HepG2 (cell line): ENCODE measurements at regions of chr5 and their contacts with region 1.

Region 1: GRCh38 chr5:140639148-140639979 is at the start of gene TMCO6:
- DNase-seq: peak; percentile 99
- ATAC-seq: peak; percentile 90
- H3K4me3 ChIP-seq: peak within 1 kb of the TSS; percentile 67 to 89 (median 71)
- H3K27ac ChIP-seq: peak within 1 kb of the TSS; percentile 94
- H3K4me1 ChIP-seq: peaks cover 67% of the 10 kb centered on the region
- H3K27me3 ChIP-seq: no peaks in the 10 kb centered on the region
- CTCF ChIP-seq: peak; percentile 82
- EP300 ChIP-seq: peak; percentile 86 to 94; a peak in 3 of 4 replicates
- POLR2A ChIP-seq: peak in 1 of 2 experiments; percentile 90; a peak in 3 of 4 replicates
- RAD21 ChIP-seq: peak; percentile 66; the same call in 1 of the 2 replicates
- total RNA-seq, gene TMCO6: 8.2 and 16.6 TPM in 2 replicates

Region 2: DNA sequence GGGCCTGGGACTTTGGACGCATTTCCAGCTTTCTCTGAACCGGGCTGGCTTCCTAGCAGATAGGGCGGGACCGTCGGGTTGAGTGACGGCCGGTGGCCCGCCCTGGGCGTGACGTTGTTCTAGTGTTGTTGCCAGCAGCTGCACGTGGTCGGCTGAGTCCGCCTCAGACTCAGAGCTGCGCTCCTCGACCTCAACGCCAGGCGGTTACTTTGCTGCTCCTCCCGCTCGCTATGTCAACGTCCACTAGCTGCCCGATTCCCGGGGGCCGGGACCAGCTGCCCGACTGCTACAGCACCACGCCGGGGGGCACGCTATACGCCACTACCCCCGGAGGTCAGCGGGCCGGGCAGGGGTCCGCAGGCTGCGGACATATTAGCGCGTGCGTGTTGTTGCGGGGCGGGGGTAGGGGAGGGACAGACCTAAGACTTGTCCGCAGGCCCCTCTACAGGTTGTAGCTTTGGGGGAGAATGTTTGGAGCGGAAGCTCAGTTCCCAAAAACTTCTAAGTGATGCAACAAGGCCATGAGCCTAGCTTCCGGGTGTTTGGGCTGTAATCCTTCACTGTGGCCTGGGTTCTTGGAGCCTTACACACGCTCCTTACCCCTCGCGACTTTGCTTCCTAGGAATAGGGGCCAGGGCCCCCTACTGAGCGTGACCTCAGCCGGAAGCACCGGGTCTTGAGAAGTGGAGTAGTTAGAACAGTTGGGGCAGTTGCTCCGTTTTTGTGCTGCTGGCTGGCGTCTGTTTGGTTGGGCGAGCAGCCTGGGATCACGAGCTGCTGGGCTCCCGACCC is 91.7 kb before region 1 on chr5 and contains the start of gene EIF4EBP3:
- CTCF ChIA-PET with region 1: no interaction called
- POLR2A ChIA-PET with region 1: interaction called, 25 read pairs
- in situ Hi-C with region 1: no loop called
- intact Hi-C with region 1: loop called (anchors 1 kb)
- DNase-seq: peak; percentile 94
- ATAC-seq: peak; percentile 94
- H3K4me3 ChIP-seq: peak within 1 kb of the TSS; percentile 21 to 69 (median 48); a peak in 5 of 6 replicates
- H3K27ac ChIP-seq: peak within 1 kb of the TSS; percentile 86
- H3K4me1 ChIP-seq: peaks cover 27% of the 10 kb centered on the region
- H3K27me3 ChIP-seq: no peaks in the 10 kb centered on the region
- CTCF ChIP-seq: peak; percentile 62
- EP300 ChIP-seq: no peak
- POLR2A ChIP-seq: peak; percentile 3 to 58
- RAD21 ChIP-seq: peak; percentile 73
- total RNA-seq, gene EIF4EBP3: 1.7 and 1.9 TPM in 2 replicates

Region 3: GRCh38 chr5:140557136-140557805 is 82.1 kb before region 1 on chr5 and contains the start of gene SRA1:
- CTCF ChIA-PET with region 1: no interaction called
- POLR2A ChIA-PET with region 1: interaction called, 10 read pairs
- in situ Hi-C with region 1: loop called (anchors 5 kb)
- intact Hi-C with region 1: no loop called
- DNase-seq: peak; percentile 85
- ATAC-seq: peak; percentile 95
- H3K4me3 ChIP-seq: peak within 1 kb of the TSS; percentile 80 to 96 (median 84)
- H3K27ac ChIP-seq: peak within 1 kb of the TSS; percentile 55
- H3K4me1 ChIP-seq: peaks cover 37% of the 10 kb centered on the region
- H3K27me3 ChIP-seq: no peaks in the 10 kb centered on the region
- CTCF ChIP-seq: peak; percentile 33
- EP300 ChIP-seq: no peak; a peak in 1 of 4 replicates
- POLR2A ChIP-seq: peak; percentile 82 to 95
- RAD21 ChIP-seq: peak; percentile 51
- total RNA-seq, gene SRA1: 32.8 and 38.1 TPM in 2 replicates

Region 4: GRCh38 chr5:140710899-140711552 is 71.7 kb after region 1 on chr5:
- CTCF ChIA-PET with region 1: no interaction called
- POLR2A ChIA-PET with region 1: interaction called, 11 read pairs
- in situ Hi-C with region 1: no loop called
- intact Hi-C with region 1: no loop called
- DNase-seq: peak; percentile 98
- ATAC-seq: peak; percentile 94
- H3K4me3 ChIP-seq: peak overlapping the region; percentile 59 to 86 (median 77)
- H3K27ac ChIP-seq: peak overlapping the region; percentile 92
- H3K4me1 ChIP-seq: peaks cover 24% of the 10 kb centered on the region
- H3K27me3 ChIP-seq: no peaks in the 10 kb centered on the region; a peak in 1 of 5 replicates
- CTCF ChIP-seq: no peak
- EP300 ChIP-seq: peak in 1 of 2 experiments; percentile 47; a peak in 1 of 4 replicates
- POLR2A ChIP-seq: peak; percentile 48 to 82
- RAD21 ChIP-seq: 0 out of 2 replicates have a peak, but pooled peaks have one; percentile 7

Region 5: DNA sequence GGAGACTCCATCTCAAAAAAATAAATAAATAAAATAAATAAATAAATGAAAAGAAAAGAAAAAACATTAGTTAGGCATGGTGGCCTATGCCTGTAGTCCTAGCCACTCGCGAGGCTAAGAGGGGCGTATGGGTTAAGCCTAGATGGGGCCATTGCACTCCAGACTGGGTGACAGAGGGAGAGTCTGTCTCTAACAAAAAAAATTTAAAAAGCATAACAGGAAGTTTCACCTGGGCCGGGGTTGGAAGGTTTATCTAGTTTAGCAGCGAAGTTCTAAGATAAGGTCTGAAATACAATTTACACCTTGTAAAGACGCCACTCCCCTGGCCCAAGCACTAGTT is 78.8 kb after region 1 on chr5:
- CTCF ChIA-PET with region 1: no interaction called
- POLR2A ChIA-PET with region 1: interaction called, 8 read pairs
- in situ Hi-C with region 1: no loop called
- intact Hi-C with region 1: loop called (anchors 2 kb)
- DNase-seq: no peak
- ATAC-seq: peak; percentile 2; the same call in 2 of the 3 replicates
- H3K4me3 ChIP-seq: peak overlapping the region; percentile 23 to 64 (median 60); a peak in 5 of 6 replicates
- H3K27ac ChIP-seq: peak overlapping the region; percentile 79
- H3K4me1 ChIP-seq: peaks cover 16% of the 10 kb centered on the region
- H3K27me3 ChIP-seq: no peaks in the 10 kb centered on the region
- CTCF ChIP-seq: no peak
- EP300 ChIP-seq: no peak
- POLR2A ChIP-seq: no peak; a peak in 1 of 4 replicates
- RAD21 ChIP-seq: no peak